ENCODE measurements at regions of chr4 and their contacts with region 1.

Region 1: GRCh38 chr4:986879-987623 is at the start of gene IDUA:
- DNase-seq: peak; percentile 76 to 94 (median 87)
- ATAC-seq: peak; percentile 85
- H3K4me3 ChIP-seq: peak within 1 kb of the TSS; percentile 64 to 89
- H3K4me3 Mint-ChIP-seq: peak within 1 kb of the TSS; percentile 89
- H3K27ac ChIP-seq: peak within 1 kb of the TSS; percentile 62 to 65
- H3K27ac Mint-ChIP-seq: peak within 1 kb of the TSS; percentile 91
- H3K4me1 ChIP-seq: peaks cover 35% of the 10 kb centered on the region
- H3K4me1 Mint-ChIP-seq: peaks cover 31% of the 10 kb centered on the region
- H3K27me3 ChIP-seq: no peaks in the 10 kb centered on the region
- H3K27me3 Mint-ChIP-seq: no peaks in the 10 kb centered on the region
- CTCF ChIP-seq: peak; percentile 61
- total RNA-seq, gene IDUA: 54.3 to 62.0 TPM

Region 2: GRCh38 chr4:242121-242848 is 744.8 kb before region 1 on chr4:
- CTCF ChIA-PET with region 1: no interaction called
- POLR2A ChIA-PET with region 1: no interaction called
- intact Hi-C with region 1: loop called in 1 of 2 experiments (anchors 2 kb)
- DNase-seq: peak; percentile 25 to 88 (median 64)
- ATAC-seq: peak; percentile 97
- H3K4me3 ChIP-seq: peak overlapping the region; percentile 49 to 55
- H3K4me3 Mint-ChIP-seq: peak overlapping the region; percentile 90
- H3K27ac ChIP-seq: peak overlapping the region in 1 of 2 experiments; percentile 64
- H3K27ac Mint-ChIP-seq: peak overlapping the region; percentile 89
- H3K4me1 ChIP-seq: peaks cover 4% of the 10 kb centered on the region
- H3K4me1 Mint-ChIP-seq: peaks cover 11% of the 10 kb centered on the region
- H3K27me3 ChIP-seq: no peaks in the 10 kb centered on the region
- H3K27me3 Mint-ChIP-seq: no peaks in the 10 kb centered on the region
- CTCF ChIP-seq: peak; percentile 78

Region 3: GRCh38 chr4:602559-602942 is 384.5 kb before region 1 on chr4:
- CTCF ChIA-PET with region 1: no interaction called
- POLR2A ChIA-PET with region 1: no interaction called
- intact Hi-C with region 1: loop called in 1 of 2 experiments (anchors 1 kb)
- DNase-seq: peak; percentile 20 to 70 (median 53)
- ATAC-seq: peak; percentile 84
- H3K4me3 ChIP-seq: no peak overlapping the region
- H3K4me3 Mint-ChIP-seq: no peak overlapping the region
- H3K27ac ChIP-seq: no peak overlapping the region
- H3K27ac Mint-ChIP-seq: no peak overlapping the region
- H3K4me1 ChIP-seq: peaks cover 11% of the 10 kb centered on the region
- H3K4me1 Mint-ChIP-seq: peaks cover 8% of the 10 kb centered on the region
- H3K27me3 ChIP-seq: peaks cover 0 to 3% of the 10 kb centered on the region in 2 experiments
- H3K27me3 Mint-ChIP-seq: peaks cover 16% of the 10 kb centered on the region
- CTCF ChIP-seq: peak; percentile 55

Region 4: GRCh38 chr4:876780-877179 is 110.3 kb before region 1 on chr4:
- CTCF ChIA-PET with region 1: interaction called, 3 read pairs
- POLR2A ChIA-PET with region 1: no interaction called
- intact Hi-C with region 1: loop called in 1 of 2 experiments (anchors 2 kb)
- DNase-seq: peak in 2 of 9 experiments; percentile 19 to 37
- ATAC-seq: no peak
- H3K4me3 ChIP-seq: no peak overlapping the region
- H3K4me3 Mint-ChIP-seq: no peak overlapping the region
- H3K27ac ChIP-seq: no peak overlapping the region
- H3K27ac Mint-ChIP-seq: no peak overlapping the region
- H3K4me1 ChIP-seq: peaks cover 23% of the 10 kb centered on the region
- H3K4me1 Mint-ChIP-seq: peaks cover 27% of the 10 kb centered on the region
- H3K27me3 ChIP-seq: no peaks in the 10 kb centered on the region
- H3K27me3 Mint-ChIP-seq: no peaks in the 10 kb centered on the region
- CTCF ChIP-seq: no peak

Region 5: DNA sequence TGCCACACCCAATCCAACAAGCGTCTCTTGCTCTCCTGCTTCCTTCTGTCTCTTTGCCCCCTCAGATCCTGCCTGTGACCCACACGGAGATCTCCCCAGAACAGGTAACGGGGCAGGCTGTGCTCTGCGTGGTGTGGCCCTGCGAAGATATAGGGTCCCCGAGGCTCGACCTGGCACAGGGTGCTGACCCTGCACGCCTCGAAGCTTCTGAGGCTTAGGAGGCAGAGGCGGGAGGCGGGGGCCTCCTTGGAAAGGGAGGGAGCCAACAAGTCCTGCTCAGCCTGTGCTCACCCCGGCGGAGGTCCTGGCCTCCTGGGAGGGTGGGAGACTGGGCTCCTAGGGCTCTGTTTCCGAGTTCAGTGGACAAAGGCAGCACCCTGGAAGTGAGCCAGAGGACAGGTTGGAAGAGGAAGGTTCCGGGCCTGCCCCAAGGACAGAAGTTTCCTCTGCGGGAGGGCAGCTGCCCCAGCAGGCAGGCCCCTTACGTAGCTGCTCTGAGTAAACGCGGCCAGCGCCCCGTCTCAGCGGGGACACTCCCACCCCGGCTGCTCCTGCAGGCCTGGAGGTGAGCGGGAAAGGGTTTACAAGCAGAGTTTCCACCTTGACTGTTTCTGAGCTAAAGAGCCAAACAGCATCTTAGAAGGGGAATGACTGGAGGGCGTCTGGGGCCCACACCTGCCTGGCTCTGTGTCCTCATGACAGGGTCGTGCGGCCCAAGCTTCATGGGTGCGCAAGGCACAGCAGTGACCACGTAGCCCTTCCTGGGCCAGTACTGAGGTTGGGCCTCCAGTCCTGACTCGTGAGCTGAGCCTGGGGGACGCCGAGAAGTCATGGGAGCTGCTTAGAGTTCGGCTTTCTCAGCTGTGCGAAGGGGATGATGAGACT is 38.8 kb before region 1 on chr4:
- CTCF ChIA-PET with region 1: no interaction called
- POLR2A ChIA-PET with region 1: no interaction called
- intact Hi-C with region 1: no loop called
- DNase-seq: peak in 1 of 9 experiments; percentile 1
- ATAC-seq: no peak
- H3K4me3 ChIP-seq: no peak overlapping the region
- H3K4me3 Mint-ChIP-seq: no peak overlapping the region
- H3K27ac ChIP-seq: no peak overlapping the region
- H3K27ac Mint-ChIP-seq: no peak overlapping the region
- H3K4me1 ChIP-seq: no peaks in the 10 kb centered on the region
- H3K4me1 Mint-ChIP-seq: peaks cover 2% of the 10 kb centered on the region
- H3K27me3 ChIP-seq: no peaks in the 10 kb centered on the region
- H3K27me3 Mint-ChIP-seq: no peaks in the 10 kb centered on the region
- CTCF ChIP-seq: no peak

Region 6: GRCh38 chr4:973431-974397 is 13.3 kb before region 1 on chr4 and contains the start of gene DGKQ:
- CTCF ChIA-PET with region 1: interaction called, 6 read pairs
- POLR2A ChIA-PET with region 1: interaction called, 4 read pairs
- intact Hi-C with region 1: loop called (anchors 1 kb)
- DNase-seq: peak; percentile 83 to 95 (median 89)
- ATAC-seq: peak; percentile 82
- H3K4me3 ChIP-seq: peak within 1 kb of the TSS; percentile 74 to 77
- H3K4me3 Mint-ChIP-seq: peak within 1 kb of the TSS; percentile 62
- H3K27ac ChIP-seq: peak within 1 kb of the TSS; percentile 56 to 85
- H3K27ac Mint-ChIP-seq: peak within 1 kb of the TSS; percentile 37
- H3K4me1 ChIP-seq: peaks cover 32% of the 10 kb centered on the region
- H3K4me1 Mint-ChIP-seq: peaks cover 17% of the 10 kb centered on the region
- H3K27me3 ChIP-seq: no peaks in the 10 kb centered on the region
- H3K27me3 Mint-ChIP-seq: no peaks in the 10 kb centered on the region
- CTCF ChIP-seq: no peak
- total RNA-seq, gene DGKQ: 28.2 to 29.7 TPM

Region 7: GRCh38 chr4:1318488-1319213 is 331.6 kb after region 1 on chr4:
- CTCF ChIA-PET with region 1: no interaction called
- POLR2A ChIA-PET with region 1: no interaction called
- intact Hi-C with region 1: no loop called
- DNase-seq: peak in 6 of 9 experiments; percentile 20 to 63 (median 44)
- ATAC-seq: no peak
- H3K4me3 ChIP-seq: no peak overlapping the region
- H3K4me3 Mint-ChIP-seq: no peak overlapping the region
- H3K27ac ChIP-seq: no peak overlapping the region
- H3K27ac Mint-ChIP-seq: no peak overlapping the region
- H3K4me1 ChIP-seq: peaks cover 8% of the 10 kb centered on the region
- H3K4me1 Mint-ChIP-seq: peaks cover 13% of the 10 kb centered on the region
- H3K27me3 ChIP-seq: no peaks in the 10 kb centered on the region
- H3K27me3 Mint-ChIP-seq: no peaks in the 10 kb centered on the region
- CTCF ChIP-seq: peak; percentile 36

Region 8: GRCh38 chr4:1337376-1337860 is 350.4 kb after region 1 on chr4:
- CTCF ChIA-PET with region 1: no interaction called
- POLR2A ChIA-PET with region 1: no interaction called
- intact Hi-C with region 1: no loop called
- DNase-seq: peak in 5 of 9 experiments; percentile 26 to 53 (median 29)
- ATAC-seq: peak; percentile 68
- H3K4me3 ChIP-seq: no peak overlapping the region
- H3K4me3 Mint-ChIP-seq: no peak overlapping the region
- H3K27ac ChIP-seq: no peak overlapping the region
- H3K27ac Mint-ChIP-seq: peak overlapping the region; percentile 49
- H3K4me1 ChIP-seq: no peaks in the 10 kb centered on the region
- H3K4me1 Mint-ChIP-seq: peaks cover 1% of the 10 kb centered on the region
- H3K27me3 ChIP-seq: no peaks in the 10 kb centered on the region
- H3K27me3 Mint-ChIP-seq: no peaks in the 10 kb centered on the region
- CTCF ChIP-seq: no peak

Measured in CD8-positive, alpha-beta T cell (primary cell).